Thyroid gland (tissue), 4 donors: ENCODE measurements at regions of chr1 and their contacts with region 1.

Region 1: DNA sequence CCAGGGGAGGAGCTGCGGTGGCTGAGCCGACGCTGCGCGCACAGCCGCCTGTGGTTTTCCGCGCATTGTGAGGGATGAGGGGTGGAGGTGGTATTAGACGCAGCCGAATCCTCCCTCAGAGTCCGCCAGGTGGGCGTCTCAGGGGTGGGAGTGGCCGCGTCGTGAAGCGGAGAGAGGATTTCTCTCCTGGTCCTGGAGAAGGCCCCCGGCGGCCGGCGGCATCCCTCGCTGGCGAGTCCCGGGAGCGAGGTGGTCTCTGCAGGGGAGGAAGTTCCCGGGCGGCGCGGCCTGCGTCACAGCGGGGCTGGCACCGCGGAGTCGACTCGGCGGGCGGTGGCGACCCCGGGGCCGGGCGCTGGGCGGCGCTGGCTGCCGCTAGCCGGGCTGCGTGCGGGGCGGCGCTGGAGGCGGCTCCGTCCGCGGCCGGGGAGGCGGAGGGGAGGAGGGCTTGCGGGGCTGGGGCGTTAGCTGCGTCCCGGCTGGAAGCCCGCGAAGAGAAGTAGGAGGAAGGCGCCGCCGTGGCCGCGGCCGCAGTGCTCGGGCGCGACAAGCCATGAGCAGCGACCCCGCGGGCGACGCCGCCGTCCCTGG is at the start of gene LRRC8C:
- DNase-seq: peak; percentile 71 to 76
- H3K4me3 ChIP-seq: peak within 1 kb of the TSS; percentile 71 to 91 (median 72)
- H3K27ac ChIP-seq: peak within 1 kb of the TSS; percentile 66 to 82 (median 69)
- H3K4me1 ChIP-seq: no peaks in the 10 kb centered on the region
- H3K27me3 ChIP-seq: no peaks in the 10 kb centered on the region
- CTCF ChIP-seq: peak in 3 of 6 experiments; percentile 62 to 83 (median 69)
- POLR2A ChIP-seq: peak in 1 of 2 donors; percentile 55
- total RNA-seq, gene LRRC8C: 4.4 to 11.0 (median 8.2) TPM

Region 2: DNA sequence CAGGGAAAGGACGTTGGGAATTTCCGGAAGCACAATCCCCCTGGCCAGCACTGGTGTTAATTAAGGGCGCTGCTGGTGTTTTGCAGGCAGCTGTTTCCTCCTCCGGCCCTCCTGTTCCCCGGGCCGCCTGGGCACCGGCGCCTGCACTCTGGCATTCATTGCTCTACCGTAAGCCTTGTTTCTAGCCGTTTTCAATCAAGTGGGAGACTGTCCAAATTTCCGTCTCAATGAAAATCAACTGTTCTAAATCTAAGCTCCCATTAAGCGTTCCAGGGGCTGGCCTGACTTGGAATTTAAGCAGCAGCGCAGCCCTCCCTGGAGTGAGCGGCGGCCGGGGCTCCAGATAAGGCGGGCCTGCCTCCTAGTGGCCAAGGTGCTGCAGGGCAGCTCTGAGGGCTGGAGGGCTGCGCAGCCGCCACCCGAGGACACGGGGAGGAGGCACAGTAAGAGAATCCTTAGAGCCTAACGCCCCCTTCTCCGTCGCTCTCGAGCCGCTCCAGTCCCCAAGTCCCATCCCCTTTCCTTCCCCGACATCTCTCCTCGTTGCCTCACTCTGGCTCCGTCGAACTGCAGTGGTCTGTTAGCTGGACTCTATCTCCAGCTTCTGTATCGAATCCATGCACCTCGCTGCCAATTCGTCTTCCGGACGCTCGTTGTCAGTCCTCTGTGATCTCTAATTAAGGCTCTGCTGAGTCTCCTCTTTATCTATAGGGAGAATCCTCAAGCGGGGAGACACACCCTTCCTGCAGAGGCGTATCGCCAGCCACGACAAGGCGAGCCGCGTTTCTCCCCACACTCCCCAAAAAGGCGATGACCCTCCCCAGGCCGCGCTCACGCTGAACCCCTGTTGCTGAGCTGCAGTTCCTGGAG is 130.3 kb after region 1 on chr1:
- intact Hi-C with region 1: loop called (anchors 5 kb)
- DNase-seq: peak; percentile 79 to 86
- H3K4me3 ChIP-seq: peak overlapping the region in 2 of 3 donors; percentile 13 to 70
- H3K27ac ChIP-seq: peak overlapping the region in 2 of 3 donors; percentile 17 to 75
- H3K4me1 ChIP-seq: peaks cover 0 to 10% of the 10 kb centered on the region in 2 donors
- H3K27me3 ChIP-seq: no peaks in the 10 kb centered on the region
- CTCF ChIP-seq: peak; percentile 78 to 97 (median 94)
- POLR2A ChIP-seq: no peak